HEK293 (cell line): ENCODE measurements at regions of chr19 and their contacts with region 1.

Region 1: DNA sequence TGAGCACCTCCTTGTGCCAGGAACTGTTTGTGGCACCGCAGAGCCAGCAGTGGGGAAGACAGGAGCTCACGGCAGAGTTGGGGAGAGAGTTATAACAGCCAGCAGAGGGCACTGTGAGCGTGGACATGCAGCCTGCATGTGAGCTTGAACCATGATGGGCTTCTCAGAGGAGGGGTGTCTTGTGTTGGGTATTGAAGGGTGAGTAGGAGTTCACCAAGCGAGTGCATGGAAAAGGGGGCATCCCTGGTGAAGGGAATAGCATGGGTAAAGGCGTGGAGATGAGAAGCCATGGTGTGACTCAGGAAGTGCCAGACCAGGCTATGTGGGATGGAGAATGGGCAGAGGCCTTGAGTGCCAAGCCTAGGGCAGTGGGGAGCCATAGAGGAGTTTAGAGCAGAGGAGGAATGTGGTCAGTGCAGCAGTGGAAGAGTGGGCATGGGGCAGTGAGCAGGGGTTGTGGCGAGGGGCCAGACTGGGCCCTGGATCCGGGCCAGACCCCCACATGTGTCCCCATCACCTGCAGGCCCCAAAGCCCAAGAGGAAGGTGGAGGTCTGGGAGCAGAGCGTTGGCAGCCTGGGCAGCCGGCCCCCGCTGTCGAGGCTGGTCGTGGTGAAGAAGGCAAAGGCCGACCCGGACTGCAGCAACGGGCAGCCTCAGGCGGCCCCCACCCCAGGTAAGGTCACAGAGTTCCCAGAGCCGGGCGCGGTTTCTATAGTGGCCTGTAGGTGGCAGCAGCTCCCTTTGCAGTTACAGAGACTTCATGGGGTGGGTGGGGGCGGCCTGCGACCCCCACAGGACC is 11.8 kb upstream of the SHD start:
- H3K4me3 ChIP-seq: no peak overlapping the region
- H3K27ac ChIP-seq: no peak overlapping the region
- H3K4me1 ChIP-seq: no peaks in the 10 kb centered on the region
- CTCF ChIP-seq: peak; percentile 91

Region 2: DNA sequence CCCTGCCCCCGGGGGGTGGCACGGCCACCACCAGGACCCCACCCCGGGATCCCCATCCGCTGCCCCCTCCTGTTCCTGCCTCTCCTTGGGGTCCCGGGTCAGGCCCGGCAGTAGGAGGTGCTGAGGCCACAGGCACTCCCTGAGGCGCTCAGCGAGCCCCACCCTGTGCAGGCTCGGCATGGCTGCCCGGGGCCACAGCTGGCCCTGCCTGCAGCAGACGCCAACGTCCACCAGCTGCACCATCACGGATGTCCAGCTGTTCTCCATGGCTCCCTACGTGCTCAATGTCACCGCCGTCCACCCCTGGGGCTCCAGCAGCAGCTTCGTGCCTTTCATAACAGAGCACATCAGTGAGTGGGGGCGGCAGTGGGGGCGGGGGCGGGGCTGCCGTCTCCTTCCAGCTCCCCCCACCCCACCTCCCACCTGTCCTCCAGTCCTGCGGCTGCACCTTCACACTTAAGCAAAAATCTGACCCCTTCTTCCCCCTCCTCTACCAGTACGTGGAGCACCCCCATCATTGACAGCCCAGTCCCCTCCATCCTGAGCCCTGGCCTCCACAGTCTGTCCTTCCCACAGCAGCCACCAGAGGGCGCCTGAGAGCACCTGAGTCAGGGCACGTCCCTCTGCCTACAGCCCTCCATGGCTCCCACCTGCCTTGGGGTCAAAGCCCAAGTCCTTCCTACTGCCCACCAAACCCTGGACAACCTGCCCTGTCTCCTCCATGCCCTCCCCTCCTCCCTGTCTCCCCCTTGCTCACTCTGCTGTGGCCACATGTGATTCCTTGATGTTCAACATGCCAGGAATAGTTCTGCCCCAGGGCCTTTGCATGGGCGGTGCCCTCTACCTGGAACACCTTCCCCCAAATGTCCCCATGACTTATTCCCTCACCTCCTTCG is 34.1 kb before region 1 on chr19:
- CTCF ChIA-PET with region 1: interaction called, 12 read pairs
- POLR2A ChIA-PET with region 1: no interaction called
- H3K4me3 ChIP-seq: peak overlapping the region; percentile 23
- H3K27ac ChIP-seq: no peak overlapping the region
- H3K4me1 ChIP-seq: no peaks in the 10 kb centered on the region
- CTCF ChIP-seq: peak; percentile 98

Region 3: GRCh38 chr19:4256563-4256962 is 10.7 kb before region 1 on chr19:
- CTCF ChIA-PET with region 1: interaction called, 19 read pairs
- POLR2A ChIA-PET with region 1: no interaction called
- H3K4me3 ChIP-seq: no peak overlapping the region
- H3K27ac ChIP-seq: no peak overlapping the region
- H3K4me1 ChIP-seq: no peaks in the 10 kb centered on the region
- CTCF ChIP-seq: no peak

Region 4: DNA sequence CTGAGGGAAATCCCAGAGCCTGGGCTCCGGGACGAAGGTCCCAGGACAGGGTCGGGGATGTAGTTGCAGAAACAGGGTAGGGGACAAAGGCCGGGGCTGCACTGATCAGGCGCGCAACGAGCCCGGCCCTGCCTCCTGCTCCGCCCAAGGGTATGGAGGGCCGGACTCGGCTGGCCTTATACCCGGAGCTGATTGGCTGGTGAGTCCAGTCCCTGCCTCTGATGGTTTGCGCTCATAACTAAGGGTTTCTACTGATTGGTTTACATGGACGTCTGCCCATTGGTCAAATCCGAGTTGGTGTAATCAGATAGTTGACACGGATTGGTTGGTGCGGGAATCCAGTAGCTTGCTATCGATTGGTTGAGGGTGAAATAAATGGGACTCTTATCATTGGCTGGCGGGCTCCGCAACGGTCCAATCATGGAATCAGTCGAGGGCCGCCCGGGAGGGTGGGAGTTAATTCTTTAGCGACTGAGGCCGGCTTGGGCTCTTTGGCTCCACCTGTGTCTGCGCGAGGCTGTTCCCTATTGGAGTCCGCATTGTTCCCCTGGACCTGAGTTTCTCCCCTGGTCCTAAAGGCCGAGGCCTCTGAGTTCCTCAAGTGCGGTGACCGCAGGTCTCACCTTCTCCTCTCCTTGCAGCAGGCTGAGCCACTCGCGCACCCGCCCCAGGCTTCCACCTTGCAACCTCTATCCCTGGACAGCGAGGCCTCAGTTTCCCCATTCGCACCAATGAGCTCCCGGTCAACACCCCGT is 75.5 kb after region 1 on chr19:
- CTCF ChIA-PET with region 1: interaction called, 37 read pairs
- POLR2A ChIA-PET with region 1: interaction called, 13 read pairs
- H3K4me3 ChIP-seq: peak overlapping the region; percentile 73
- H3K27ac ChIP-seq: peak overlapping the region; percentile 68
- H3K4me1 ChIP-seq: peaks cover 3% of the 10 kb centered on the region; the same call in 1 of the 2 replicates
- CTCF ChIP-seq: peak; percentile 75

Region 5: GRCh38 chr19:4362861-4363510 is 95.7 kb after region 1 on chr19:
- CTCF ChIA-PET with region 1: interaction called, 17 read pairs
- POLR2A ChIA-PET with region 1: interaction called, 6 read pairs
- H3K4me3 ChIP-seq: no peak overlapping the region
- H3K27ac ChIP-seq: no peak overlapping the region
- H3K4me1 ChIP-seq: no peaks in the 10 kb centered on the region
- CTCF ChIP-seq: peak; percentile 59

Region 6: DNA sequence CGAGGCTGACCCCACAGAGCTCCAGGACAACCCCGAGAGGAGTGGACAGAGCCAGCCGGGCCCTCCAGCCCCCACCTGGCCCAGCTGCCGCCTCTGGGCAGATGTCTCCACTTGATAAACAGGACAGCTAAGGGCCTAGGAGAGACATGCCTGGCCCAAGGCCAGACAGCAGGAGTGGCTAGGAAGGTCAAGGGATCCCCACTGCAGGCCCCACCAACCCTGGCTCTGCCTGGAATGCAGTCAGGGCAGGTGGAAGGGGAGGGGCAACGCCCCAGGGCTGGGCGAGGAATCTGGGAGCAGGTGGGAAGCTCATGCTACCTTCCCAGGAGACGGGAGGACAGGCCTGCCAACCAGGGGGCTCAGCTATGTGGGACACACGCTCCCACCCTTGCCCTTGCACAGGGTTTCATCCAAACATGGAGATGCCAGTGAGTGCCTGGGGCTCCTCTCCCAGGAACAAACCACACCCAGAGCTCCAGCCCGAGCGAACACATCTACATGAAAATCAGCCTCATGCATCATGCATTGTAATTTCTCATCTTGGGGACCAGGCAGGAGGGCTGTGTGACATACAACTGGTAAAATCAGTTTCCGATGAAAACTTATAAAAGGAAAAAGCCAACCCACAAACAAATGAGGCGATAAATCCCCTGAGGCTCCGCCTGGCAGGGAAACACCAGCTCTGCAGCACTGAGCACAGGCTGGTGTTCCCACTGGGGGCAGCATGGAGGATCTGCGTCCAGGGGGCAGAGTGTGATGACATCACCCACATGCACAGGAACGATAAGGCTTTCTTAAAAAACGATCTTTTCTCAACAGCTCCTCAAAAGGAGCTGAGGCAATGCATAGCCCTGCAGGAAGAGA is 108.1 kb after region 1 on chr19:
- CTCF ChIA-PET with region 1: interaction called, 14 read pairs
- POLR2A ChIA-PET with region 1: no interaction called
- H3K4me3 ChIP-seq: no peak overlapping the region
- H3K27ac ChIP-seq: no peak overlapping the region; the same call in 1 of the 2 replicates
- H3K4me1 ChIP-seq: peaks cover 9% of the 10 kb centered on the region
- CTCF ChIP-seq: peak; percentile 88

Region 7: DNA sequence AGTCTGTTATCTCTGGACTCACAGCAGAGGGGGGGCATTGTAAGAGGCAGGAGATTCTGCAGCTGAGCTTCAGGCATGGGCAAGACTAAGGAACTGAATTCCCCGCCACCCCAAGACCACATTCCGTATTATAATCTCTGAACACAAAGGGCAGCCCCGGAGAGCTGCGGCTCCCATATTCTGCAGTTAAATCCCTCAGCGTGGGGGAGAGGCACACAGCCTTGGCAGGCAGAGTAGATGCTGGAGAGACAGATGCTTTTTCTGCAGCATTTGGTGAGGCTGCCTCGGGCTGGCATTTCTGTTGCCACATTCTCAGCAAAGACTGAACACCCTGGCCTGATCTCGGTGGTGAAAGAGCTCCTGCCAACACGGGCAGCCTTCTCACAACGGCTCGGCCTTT is 148.1 kb after region 1 on chr19:
- CTCF ChIA-PET with region 1: interaction called, 14 read pairs
- POLR2A ChIA-PET with region 1: no interaction called
- H3K4me3 ChIP-seq: no peak overlapping the region
- H3K27ac ChIP-seq: no peak overlapping the region
- H3K4me1 ChIP-seq: peaks cover 15% of the 10 kb centered on the region
- CTCF ChIP-seq: no peak